Activated CD8-positive, alpha-beta T cell treated with anti-CD3 and anti-CD28 coated beads for 36 hours (primary cell): ENCODE measurements at regions of chr12 and their contacts with region 1.

Region 1: GRCh38 chr12:121417847-121418246 is 17.9 kb downstream of the RNF34 start:
- DNase-seq: no peak
- ATAC-seq: no peak
- H3K4me3 Mint-ChIP-seq: no peak overlapping the region
- H3K27ac Mint-ChIP-seq: no peak overlapping the region
- H3K4me1 Mint-ChIP-seq: peaks cover 17% of the 10 kb centered on the region
- H3K27me3 Mint-ChIP-seq: no peaks in the 10 kb centered on the region
- CTCF ChIP-seq: no peak

Region 2: DNA sequence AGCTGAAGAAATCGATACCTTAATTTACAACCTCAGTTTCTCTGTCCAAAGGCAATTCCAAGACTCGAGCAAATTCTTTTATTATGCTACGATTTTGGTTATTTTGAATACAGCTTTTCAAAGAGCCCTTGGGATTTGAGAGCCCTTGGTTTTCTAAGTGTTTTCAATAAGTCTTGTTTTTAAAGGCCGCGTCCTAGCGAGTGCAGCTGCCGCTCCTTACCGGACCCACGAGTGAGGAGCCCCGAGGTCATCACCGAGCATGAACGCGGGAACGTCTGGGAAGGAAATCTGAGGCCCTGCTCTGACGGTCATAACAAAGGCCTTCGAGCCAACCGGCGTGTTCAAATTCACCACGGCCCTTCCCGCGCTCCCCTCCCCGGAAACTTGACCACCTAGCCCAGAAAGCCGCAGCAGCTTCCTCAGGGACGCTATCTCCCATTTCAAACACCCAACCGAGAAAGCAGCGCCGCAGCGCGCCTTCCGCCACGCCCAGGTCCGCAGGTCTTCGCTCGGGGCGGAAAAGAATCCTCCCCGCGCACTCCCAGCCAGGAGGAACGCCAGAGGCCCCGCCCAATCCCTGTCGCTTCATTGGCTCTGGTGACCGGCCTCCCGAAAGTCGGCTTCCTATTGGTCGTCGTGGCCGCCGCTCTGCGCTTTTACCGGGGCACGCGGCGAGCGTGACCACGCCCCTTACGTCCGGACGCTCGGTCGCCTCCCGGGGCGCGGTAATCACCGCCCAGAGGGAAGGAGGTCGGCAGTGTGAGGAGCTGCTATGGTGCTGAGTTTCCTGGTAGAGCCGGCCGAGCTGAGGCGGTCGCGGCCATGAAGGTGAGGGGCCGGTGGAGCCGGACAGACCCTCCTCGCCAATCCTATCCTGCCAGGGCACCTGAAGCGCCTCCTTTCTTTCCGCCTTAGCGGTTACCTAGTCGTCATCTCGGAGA is 18.2 kb before region 1 on chr12 and contains the start of gene RNF34:
- CTCF ChIA-PET with region 1: interaction called, 4 read pairs
- POLR2A ChIA-PET with region 1: interaction called, 10 read pairs
- intact Hi-C with region 1: no loop called
- DNase-seq: peak; percentile 99
- ATAC-seq: peak; percentile 92
- H3K4me3 Mint-ChIP-seq: peak within 1 kb of the TSS; percentile 85
- H3K27ac Mint-ChIP-seq: peak within 1 kb of the TSS; percentile 93
- H3K4me1 Mint-ChIP-seq: peaks cover 26% of the 10 kb centered on the region
- H3K27me3 Mint-ChIP-seq: no peaks in the 10 kb centered on the region
- CTCF ChIP-seq: no peak
- total RNA-seq, gene RNF34: 44.1 to 44.9 TPM

Region 3: GRCh38 chr12:121543786-121544185 is 125.9 kb after region 1 on chr12:
- CTCF ChIA-PET with region 1: no interaction called
- POLR2A ChIA-PET with region 1: no interaction called
- intact Hi-C with region 1: no loop called
- DNase-seq: no peak
- ATAC-seq: no peak
- H3K4me3 Mint-ChIP-seq: no peak overlapping the region
- H3K27ac Mint-ChIP-seq: no peak overlapping the region
- H3K4me1 Mint-ChIP-seq: peaks cover 8% of the 10 kb centered on the region
- H3K27me3 Mint-ChIP-seq: no peaks in the 10 kb centered on the region
- CTCF ChIP-seq: no peak

Region 4: DNA sequence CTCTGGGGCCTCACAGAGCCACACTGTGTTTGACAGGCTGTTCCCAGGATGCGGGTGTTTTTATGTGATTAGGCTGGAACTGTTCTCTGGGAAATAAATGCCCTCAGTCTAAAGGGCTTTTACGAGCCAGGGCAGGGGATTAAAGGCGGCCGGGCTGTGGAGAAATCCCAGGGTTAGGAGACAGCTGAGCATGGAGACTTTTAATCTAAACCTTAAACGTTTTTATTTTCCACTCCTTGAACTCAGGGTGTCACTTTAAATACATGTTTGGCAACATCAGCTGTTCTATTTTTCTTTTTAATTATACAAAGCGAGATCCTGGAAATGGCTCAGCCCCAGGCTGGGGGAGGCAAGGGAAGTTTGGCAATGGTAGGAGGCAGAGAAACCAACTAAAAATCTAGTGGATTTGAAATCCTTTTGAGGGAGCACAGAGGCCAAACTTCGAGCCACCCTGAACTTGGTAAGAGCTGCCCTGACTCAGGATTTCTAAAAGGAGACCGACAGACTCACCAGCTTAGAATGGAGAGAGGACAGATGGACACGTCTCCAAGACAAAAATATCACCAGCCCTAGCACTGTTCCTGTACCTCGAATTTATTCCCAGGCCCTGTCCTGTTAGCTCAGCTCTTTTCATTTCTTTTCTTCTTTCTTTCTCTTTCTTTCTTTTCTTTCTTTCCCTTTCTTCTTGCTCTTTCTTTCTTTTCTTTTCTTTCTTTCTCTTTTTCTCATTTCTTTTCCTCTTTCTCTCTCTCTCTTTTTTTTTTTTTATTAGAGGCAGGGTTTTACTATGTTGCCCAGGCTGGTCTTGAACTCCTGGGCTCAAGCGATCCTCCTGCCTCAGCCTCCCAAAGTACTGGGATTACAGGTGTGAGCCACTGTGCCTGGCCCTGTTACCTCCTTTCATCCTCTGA is 192.6 kb after region 1 on chr12:
- CTCF ChIA-PET with region 1: no interaction called
- POLR2A ChIA-PET with region 1: no interaction called
- intact Hi-C with region 1: no loop called
- DNase-seq: no peak
- ATAC-seq: no peak
- H3K4me3 Mint-ChIP-seq: no peak overlapping the region
- H3K27ac Mint-ChIP-seq: no peak overlapping the region
- H3K4me1 Mint-ChIP-seq: no peaks in the 10 kb centered on the region
- H3K27me3 Mint-ChIP-seq: no peaks in the 10 kb centered on the region
- CTCF ChIP-seq: peak; percentile 29